Activated CD8-positive, alpha-beta T cell treated with anti-CD3 and anti-CD28 coated beads, Interleukin-2, amount 10 ng/mL, durations not matched to agents 7 days and 5 days (primary cell): ENCODE measurements at regions of chr2 and their contacts with region 1.

Region 1: DNA sequence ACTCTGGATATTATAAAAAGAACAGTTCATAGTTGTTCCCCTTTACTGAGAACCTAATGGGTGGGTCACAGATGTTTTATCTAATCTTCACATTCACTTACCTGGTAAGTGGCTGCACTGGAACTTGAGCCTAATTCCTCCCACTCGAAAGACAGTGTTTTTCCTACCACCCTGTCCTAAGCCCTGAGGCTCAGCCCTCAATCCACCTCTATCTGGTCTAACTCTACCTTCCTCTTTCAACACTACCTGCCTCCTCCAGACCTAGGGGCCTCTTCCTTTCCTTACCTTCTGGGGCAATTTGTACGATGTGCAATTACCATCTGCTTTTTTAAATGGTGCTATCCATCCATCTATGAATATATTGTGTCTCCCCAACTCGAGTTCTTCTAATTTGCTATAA is 9.7 kb upstream of the KIF3C start:
- DNase-seq: no peak
- ATAC-seq: no peak
- H3K4me3 Mint-ChIP-seq: no peak overlapping the region
- H3K27ac Mint-ChIP-seq: no peak overlapping the region
- H3K4me1 Mint-ChIP-seq: peaks cover 23% of the 10 kb centered on the region
- H3K27me3 Mint-ChIP-seq: peaks cover 7% of the 10 kb centered on the region

Region 2: DNA sequence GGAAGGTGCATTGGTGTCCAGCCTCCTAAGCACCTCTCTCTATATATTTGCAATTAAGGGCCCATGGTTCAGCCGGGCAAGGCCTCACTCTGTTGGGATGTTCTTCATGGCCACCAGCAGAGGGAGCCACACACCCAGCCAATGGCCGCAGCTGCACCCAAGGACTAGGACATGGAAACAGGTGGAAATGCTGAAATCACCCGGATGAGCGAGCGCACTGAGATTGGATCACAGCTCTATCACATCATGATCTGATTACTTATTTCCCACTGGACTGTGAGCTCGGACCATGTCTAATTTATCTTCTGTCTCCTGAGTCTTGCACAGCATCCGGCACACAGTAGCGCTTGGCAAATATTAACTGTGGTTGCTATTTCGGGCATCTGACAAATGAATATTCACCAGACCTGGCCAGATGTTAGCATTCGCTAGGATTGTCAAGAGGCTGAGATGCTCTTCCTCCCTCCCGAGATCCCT is 40.9 kb before region 1 on chr2:
- CTCF ChIA-PET with region 1: interaction called, 13 read pairs
- POLR2A ChIA-PET with region 1: no interaction called
- DNase-seq: peak; percentile 78
- ATAC-seq: peak; percentile 95
- H3K4me3 Mint-ChIP-seq: no peak overlapping the region
- H3K27ac Mint-ChIP-seq: no peak overlapping the region
- H3K4me1 Mint-ChIP-seq: peaks cover 6% of the 10 kb centered on the region
- H3K27me3 Mint-ChIP-seq: no peaks in the 10 kb centered on the region

Region 3: GRCh38 chr2:26033818-26034636 is 42.1 kb after region 1 on chr2 and contains the start of gene RAB10:
- CTCF ChIA-PET with region 1: interaction called, 29 read pairs
- POLR2A ChIA-PET with region 1: interaction called, 4 read pairs
- DNase-seq: peak; percentile 99
- ATAC-seq: peak; percentile 95
- H3K4me3 Mint-ChIP-seq: peak within 1 kb of the TSS; percentile 90
- H3K27ac Mint-ChIP-seq: peak within 1 kb of the TSS; percentile 94
- H3K4me1 Mint-ChIP-seq: peaks cover 28% of the 10 kb centered on the region
- H3K27me3 Mint-ChIP-seq: no peaks in the 10 kb centered on the region
- total RNA-seq, gene RAB10: 110 to 115 TPM

Region 4: GRCh38 chr2:26088032-26088643 is 96.2 kb after region 1 on chr2:
- CTCF ChIA-PET with region 1: interaction called, 30 read pairs
- POLR2A ChIA-PET with region 1: no interaction called
- DNase-seq: peak; percentile 33
- ATAC-seq: peak; percentile 63
- H3K4me3 Mint-ChIP-seq: no peak overlapping the region
- H3K27ac Mint-ChIP-seq: no peak overlapping the region
- H3K4me1 Mint-ChIP-seq: peaks cover 35% of the 10 kb centered on the region
- H3K27me3 Mint-ChIP-seq: no peaks in the 10 kb centered on the region

Region 5: GRCh38 chr2:26136451-26136850 is 144.5 kb after region 1 on chr2:
- CTCF ChIA-PET with region 1: interaction called, 81 read pairs
- POLR2A ChIA-PET with region 1: no interaction called
- DNase-seq: no peak
- ATAC-seq: no peak
- H3K4me3 Mint-ChIP-seq: no peak overlapping the region
- H3K27ac Mint-ChIP-seq: no peak overlapping the region
- H3K4me1 Mint-ChIP-seq: no peaks in the 10 kb centered on the region
- H3K27me3 Mint-ChIP-seq: no peaks in the 10 kb centered on the region

Region 6: GRCh38 chr2:26144953-26145680 is 153.2 kb after region 1 on chr2:
- CTCF ChIA-PET with region 1: interaction called, 81 read pairs
- POLR2A ChIA-PET with region 1: no interaction called
- DNase-seq: peak; percentile 78
- ATAC-seq: peak; percentile 68
- H3K4me3 Mint-ChIP-seq: no peak overlapping the region
- H3K27ac Mint-ChIP-seq: no peak overlapping the region
- H3K4me1 Mint-ChIP-seq: peaks cover 2% of the 10 kb centered on the region
- H3K27me3 Mint-ChIP-seq: peaks cover 10% of the 10 kb centered on the region